ENCODE measurements at regions of chr2 and their contacts with region 1.

Region 1: DNA sequence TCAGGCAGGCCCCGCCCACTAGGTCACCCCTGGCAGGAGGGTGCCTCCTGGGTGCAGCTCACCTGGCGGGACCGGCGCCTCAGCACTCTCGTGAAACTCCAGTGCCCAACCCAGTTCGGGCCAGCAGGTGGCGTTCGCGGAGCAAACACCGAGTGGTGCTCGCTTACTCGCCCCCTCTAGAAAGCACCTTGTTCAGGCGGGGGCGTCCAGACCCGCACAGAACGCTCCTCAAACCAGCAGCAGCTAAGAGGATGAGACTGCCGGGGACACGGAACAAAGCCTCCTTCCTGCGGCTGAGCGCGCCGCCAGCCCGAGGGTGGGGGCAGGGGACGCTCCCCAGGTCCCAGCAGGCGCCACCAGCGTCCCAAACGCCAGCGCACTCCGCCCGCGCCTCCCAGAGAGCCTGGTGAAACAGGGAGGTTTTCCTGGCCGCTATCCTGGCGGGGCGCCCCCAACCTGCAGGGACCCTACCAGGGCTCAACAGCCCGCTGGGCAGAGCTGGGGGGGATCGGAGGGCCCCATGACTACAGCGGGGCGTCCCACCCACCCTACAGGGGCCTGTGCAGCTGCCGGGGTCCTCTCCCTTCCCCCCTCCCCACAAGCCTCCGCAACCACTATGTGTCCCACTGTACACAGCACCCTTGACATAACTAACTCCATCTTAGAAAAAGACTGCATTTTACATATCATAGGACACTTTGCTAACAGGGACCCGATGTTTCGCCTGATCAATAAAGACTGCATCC is 44.7 kb downstream of the MRPS5 start:
- H3K4me3 ChIP-seq: peak overlapping the region; percentile 38
- H3K27ac ChIP-seq: no peak overlapping the region; the same call in 1 of the 2 replicates
- H3K4me1 ChIP-seq: no peaks in the 10 kb centered on the region
- CTCF ChIP-seq: peak; percentile 93

Region 2: GRCh38 chr2:94986392-94986963 is 90.5 kb before region 1 on chr2:
- CTCF ChIA-PET with region 1: interaction called, 11 read pairs
- POLR2A ChIA-PET with region 1: no interaction called
- H3K4me3 ChIP-seq: no peak overlapping the region
- H3K27ac ChIP-seq: no peak overlapping the region
- H3K4me1 ChIP-seq: no peaks in the 10 kb centered on the region
- CTCF ChIP-seq: no peak

Region 3: GRCh38 chr2:95022309-95023221 is 54.4 kb before region 1 on chr2:
- CTCF ChIA-PET with region 1: interaction called, 59 read pairs
- POLR2A ChIA-PET with region 1: no interaction called
- H3K4me3 ChIP-seq: no peak overlapping the region
- H3K27ac ChIP-seq: no peak overlapping the region
- H3K4me1 ChIP-seq: no peaks in the 10 kb centered on the region
- CTCF ChIP-seq: peak; percentile 71

Region 4: GRCh38 chr2:95091885-95092555 is 15.1 kb after region 1 on chr2:
- CTCF ChIA-PET with region 1: interaction called, 12 read pairs
- POLR2A ChIA-PET with region 1: no interaction called
- H3K4me3 ChIP-seq: no peak overlapping the region
- H3K27ac ChIP-seq: no peak overlapping the region
- H3K4me1 ChIP-seq: no peaks in the 10 kb centered on the region
- CTCF ChIP-seq: no peak

Region 5: DNA sequence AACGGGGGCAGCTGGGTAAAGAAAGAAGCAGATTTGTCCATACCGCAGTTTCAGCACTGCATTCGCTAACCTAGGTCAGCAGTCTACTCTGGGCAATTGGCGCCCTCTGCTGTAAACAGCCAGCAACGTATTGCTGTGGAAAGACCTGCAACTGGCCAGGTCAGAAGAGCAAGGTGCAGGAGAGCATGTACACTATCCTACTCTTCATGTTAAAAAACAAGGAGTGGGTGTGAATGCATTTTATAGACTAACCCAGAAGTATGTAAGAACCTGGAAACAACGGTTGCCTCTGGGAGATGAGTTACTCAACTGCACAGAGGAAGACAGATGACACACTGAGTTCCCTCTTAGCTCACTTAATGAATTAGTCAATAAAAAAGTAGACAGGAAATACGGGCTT is 38.5 kb after region 1 on chr2:
- CTCF ChIA-PET with region 1: interaction called, 16 read pairs
- POLR2A ChIA-PET with region 1: no interaction called
- H3K4me3 ChIP-seq: no peak overlapping the region
- H3K27ac ChIP-seq: no peak overlapping the region
- H3K4me1 ChIP-seq: no peaks in the 10 kb centered on the region; the same call in 1 of the 2 replicates
- CTCF ChIP-seq: no peak

Region 6: DNA sequence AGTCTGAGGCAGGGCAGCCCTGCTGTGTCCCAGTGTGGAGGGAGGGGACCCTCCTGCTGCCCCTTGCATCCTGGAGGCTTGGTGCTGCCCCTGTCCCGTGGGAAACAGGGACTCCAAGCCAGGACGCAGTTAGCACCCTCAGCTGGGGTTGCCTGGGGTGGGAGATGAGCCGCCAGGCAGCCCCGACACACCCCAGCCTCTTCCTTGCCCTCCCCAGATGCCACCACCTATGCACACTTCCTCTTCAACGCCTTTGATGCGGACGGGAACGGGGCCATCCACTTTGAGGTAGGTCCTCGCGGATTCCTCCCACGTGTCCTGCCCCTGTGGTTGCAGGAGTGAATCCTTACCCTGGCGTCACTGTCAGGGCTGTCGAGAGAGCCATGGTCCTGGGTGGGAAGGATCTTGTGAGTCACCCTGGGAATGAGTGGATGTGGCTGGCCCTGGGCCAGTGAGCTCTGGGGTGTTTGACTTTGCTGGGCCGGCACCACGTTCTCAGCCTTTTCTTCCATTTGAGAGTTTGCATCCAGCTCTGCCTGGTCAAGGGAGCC is 298.0 kb after region 1 on chr2:
- CTCF ChIA-PET with region 1: no interaction called
- POLR2A ChIA-PET with region 1: no interaction called
- H3K4me3 ChIP-seq: no peak overlapping the region
- H3K27ac ChIP-seq: no peak overlapping the region
- H3K4me1 ChIP-seq: no peaks in the 10 kb centered on the region
- CTCF ChIP-seq: no peak

Measured in HEK293 (cell line).